AG04450 (cell line): ENCODE measurements at regions of chr1 and their contacts with region 1.

Region 1: GRCh38 chr1:156226116-156226538 is 13.3 kb downstream of the PMF1 start:
- DNase-seq: no peak
- H3K4me3 ChIP-seq: no peak overlapping the region
- H3K27ac ChIP-seq: no peak overlapping the region
- H3K27me3 ChIP-seq: no peaks in the 10 kb centered on the region
- CTCF ChIP-seq: no peak

Region 2: GRCh38 chr1:155911156-155912055 is 314.7 kb before region 1 on chr1 and contains the start of gene RIT1:
- CTCF ChIA-PET with region 1: no interaction called
- POLR2A ChIA-PET with region 1: no interaction called
- DNase-seq: no peak
- H3K4me3 ChIP-seq: peak within 1 kb of the TSS; percentile 73
- H3K27ac ChIP-seq: peak within 1 kb of the TSS; percentile 84
- H3K27me3 ChIP-seq: no peaks in the 10 kb centered on the region
- CTCF ChIP-seq: peak; percentile 23; the same call in 1 of the 2 replicates
- polyA plus RNA-seq, gene RIT1: 56.4 and 65.2 TPM in 2 replicates

Region 3: GRCh38 chr1:156014826-156015225 is 211.3 kb before region 1 on chr1:
- CTCF ChIA-PET with region 1: no interaction called
- POLR2A ChIA-PET with region 1: no interaction called
- DNase-seq: no peak
- H3K4me3 ChIP-seq: no peak overlapping the region
- H3K27ac ChIP-seq: no peak overlapping the region
- H3K27me3 ChIP-seq: no peaks in the 10 kb centered on the region
- CTCF ChIP-seq: no peak

Region 4: DNA sequence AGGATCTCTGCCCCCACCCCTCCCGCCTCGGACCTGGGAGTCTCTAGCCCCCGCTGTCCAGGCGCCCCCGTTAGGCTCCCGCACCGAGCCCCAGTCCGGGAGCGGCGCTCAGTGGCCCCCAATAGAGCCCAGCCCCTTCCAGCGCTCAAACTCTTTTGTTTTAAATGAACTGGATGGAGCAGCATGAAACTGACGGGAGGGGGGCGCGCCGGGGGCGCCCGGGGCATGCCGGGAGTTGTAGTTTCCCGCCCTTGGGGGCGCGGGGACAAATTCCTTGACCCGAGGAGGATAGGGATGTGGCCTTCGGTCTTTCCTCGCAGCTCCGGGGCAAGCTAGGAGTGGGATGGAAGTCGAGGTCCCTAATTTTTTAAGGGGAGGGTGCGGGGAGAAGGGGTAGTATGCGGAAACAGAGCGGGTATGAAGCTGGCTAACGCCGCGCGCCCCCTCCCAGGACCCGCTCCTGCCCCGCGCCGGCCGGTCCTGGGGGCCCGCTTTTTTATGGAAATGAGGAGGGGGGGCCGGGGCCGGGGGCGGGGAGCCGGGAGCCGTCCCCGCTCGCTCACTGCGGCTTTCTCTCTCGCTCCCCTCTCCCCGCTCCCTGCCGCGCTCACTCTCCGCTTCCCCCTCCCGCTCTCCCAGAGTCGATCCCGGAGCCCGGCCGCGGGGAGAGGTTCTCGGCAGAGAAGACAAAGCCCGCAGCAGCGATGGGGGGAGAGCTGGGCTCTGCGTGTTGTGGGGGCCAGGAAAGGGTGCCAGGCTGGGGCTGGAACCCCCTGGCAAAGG is 143.6 kb before region 1 on chr1 and contains the start of gene MEX3A:
- CTCF ChIA-PET with region 1: interaction called, 68 read pairs
- POLR2A ChIA-PET with region 1: no interaction called
- DNase-seq: no peak
- H3K4me3 ChIP-seq: peak within 1 kb of the TSS; percentile 87
- H3K27ac ChIP-seq: peak within 1 kb of the TSS; percentile 61
- H3K27me3 ChIP-seq: no peaks in the 10 kb centered on the region
- CTCF ChIP-seq: no peak
- polyA plus RNA-seq, gene MEX3A: 11.8 and 14.6 TPM in 2 replicates

Region 5: GRCh38 chr1:156096640-156097391 is 129.3 kb before region 1 on chr1:
- CTCF ChIA-PET with region 1: interaction called, 90 read pairs
- POLR2A ChIA-PET with region 1: interaction called, 9 read pairs
- DNase-seq: peak; percentile 67
- H3K4me3 ChIP-seq: no peak overlapping the region
- H3K27ac ChIP-seq: peak overlapping the region; percentile 47
- H3K27me3 ChIP-seq: no peaks in the 10 kb centered on the region
- CTCF ChIP-seq: peak; percentile 98

Region 6: DNA sequence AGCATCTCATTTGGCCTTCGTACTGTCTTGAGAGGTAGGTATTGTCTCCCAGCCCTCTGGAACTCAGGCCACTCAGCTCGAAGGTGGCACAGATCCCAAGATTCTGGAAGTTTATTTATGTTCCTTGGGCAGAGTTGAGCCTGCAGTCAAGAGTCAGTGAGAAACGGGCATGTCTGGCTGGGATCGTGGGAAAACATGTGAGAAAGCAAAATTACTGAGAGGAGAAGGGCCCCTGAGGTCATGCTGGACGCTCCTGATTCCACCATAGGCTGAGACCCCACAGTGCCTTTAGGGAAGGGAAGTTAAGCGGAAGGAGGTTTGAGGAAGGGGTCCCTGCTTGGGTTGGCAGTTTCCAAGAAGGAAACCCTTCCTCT is 85.3 kb before region 1 on chr1:
- CTCF ChIA-PET with region 1: interaction called, 136 read pairs
- POLR2A ChIA-PET with region 1: no interaction called
- DNase-seq: no peak
- H3K4me3 ChIP-seq: no peak overlapping the region
- H3K27ac ChIP-seq: peak overlapping the region; percentile 47
- H3K27me3 ChIP-seq: no peaks in the 10 kb centered on the region
- CTCF ChIP-seq: no peak

Region 7: DNA sequence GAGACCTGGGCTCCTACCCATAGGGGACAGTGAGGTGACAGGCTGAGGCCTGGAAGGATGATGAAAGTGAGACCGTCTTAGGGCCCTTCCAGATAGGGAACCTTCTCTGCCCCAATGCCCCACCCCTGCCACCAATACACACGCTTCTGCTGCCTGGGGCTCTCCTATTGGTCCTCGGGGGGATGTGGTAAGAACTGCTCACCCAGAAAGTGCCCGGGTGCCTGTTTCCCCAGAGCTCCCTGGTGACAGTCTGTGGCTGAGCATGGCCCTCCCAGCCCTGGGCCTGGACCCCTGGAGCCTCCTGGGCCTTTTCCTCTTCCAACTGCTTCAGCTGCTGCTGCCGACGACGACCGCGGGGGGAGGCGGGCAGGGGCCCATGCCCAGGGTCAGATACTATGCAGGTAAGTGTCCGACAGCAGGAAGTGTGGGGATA is 71.8 kb before region 1 on chr1:
- CTCF ChIA-PET with region 1: interaction called, 13 read pairs
- POLR2A ChIA-PET with region 1: no interaction called
- DNase-seq: no peak
- H3K4me3 ChIP-seq: no peak overlapping the region
- H3K27ac ChIP-seq: no peak overlapping the region
- H3K27me3 ChIP-seq: peaks cover 9% of the 10 kb centered on the region
- CTCF ChIP-seq: no peak

Region 8: GRCh38 chr1:156212833-156213643 is 13.1 kb before region 1 on chr1 and contains the start of gene PMF1:
- CTCF ChIA-PET with region 1: interaction called, 37 read pairs
- POLR2A ChIA-PET with region 1: interaction called, 12 read pairs
- DNase-seq: peak; percentile 83
- H3K4me3 ChIP-seq: peak within 1 kb of the TSS; percentile 96
- H3K27ac ChIP-seq: peak within 1 kb of the TSS; percentile 96
- H3K27me3 ChIP-seq: no peaks in the 10 kb centered on the region
- CTCF ChIP-seq: no peak
- polyA plus RNA-seq, gene PMF1: 43.5 and 53.3 TPM in 2 replicates